ENCODE measurements at regions of chr5 and their contacts with region 1.

Region 1: GRCh38 chr5:159262859-159263567 is at the start of gene UBLCP1:
- DNase-seq: peak; percentile 90
- H3K4me3 ChIP-seq: peak within 1 kb of the TSS; percentile 97 to 100
- H3K27ac ChIP-seq: peak within 1 kb of the TSS; percentile 94 to 98
- H3K4me1 ChIP-seq: peaks cover 0 to 10% of the 10 kb centered on the region in 2 experiments; a peak in 2 of 4 replicates
- H3K27me3 ChIP-seq: no peaks in the 10 kb centered on the region
- CTCF ChIP-seq: no peak
- EP300 ChIP-seq: no peak
- RAD21 ChIP-seq: no peak; the same call in 1 of the 2 replicates
- polyA plus RNA-seq, gene UBLCP1: 13.8 and 19.5 TPM in 2 replicates

Region 2: GRCh38 chr5:159207686-159208513 is 55.1 kb before region 1 on chr5:
- CTCF ChIA-PET with region 1: no interaction called
- POLR2A ChIA-PET with region 1: interaction called, 10 read pairs
- DNase-seq: peak; percentile 84
- H3K4me3 ChIP-seq: peak overlapping the region; percentile 78 to 88
- H3K27ac ChIP-seq: peak overlapping the region; percentile 90 to 98
- H3K4me1 ChIP-seq: peaks cover 19 to 51% of the 10 kb centered on the region in 2 experiments; a peak in 3 of 4 replicates
- H3K27me3 ChIP-seq: no peaks in the 10 kb centered on the region
- CTCF ChIP-seq: no peak
- EP300 ChIP-seq: 0 out of 4 replicates have a peak, but pooled peaks of 1 of the 2 experiments have one; percentile 62
- RAD21 ChIP-seq: no peak; the same call in 1 of the 2 replicates

Measured in SK-N-SH (cell line).